HAP-1 (cell line): ENCODE measurements at regions of chr14 and their contacts with region 1.

Region 1: DNA sequence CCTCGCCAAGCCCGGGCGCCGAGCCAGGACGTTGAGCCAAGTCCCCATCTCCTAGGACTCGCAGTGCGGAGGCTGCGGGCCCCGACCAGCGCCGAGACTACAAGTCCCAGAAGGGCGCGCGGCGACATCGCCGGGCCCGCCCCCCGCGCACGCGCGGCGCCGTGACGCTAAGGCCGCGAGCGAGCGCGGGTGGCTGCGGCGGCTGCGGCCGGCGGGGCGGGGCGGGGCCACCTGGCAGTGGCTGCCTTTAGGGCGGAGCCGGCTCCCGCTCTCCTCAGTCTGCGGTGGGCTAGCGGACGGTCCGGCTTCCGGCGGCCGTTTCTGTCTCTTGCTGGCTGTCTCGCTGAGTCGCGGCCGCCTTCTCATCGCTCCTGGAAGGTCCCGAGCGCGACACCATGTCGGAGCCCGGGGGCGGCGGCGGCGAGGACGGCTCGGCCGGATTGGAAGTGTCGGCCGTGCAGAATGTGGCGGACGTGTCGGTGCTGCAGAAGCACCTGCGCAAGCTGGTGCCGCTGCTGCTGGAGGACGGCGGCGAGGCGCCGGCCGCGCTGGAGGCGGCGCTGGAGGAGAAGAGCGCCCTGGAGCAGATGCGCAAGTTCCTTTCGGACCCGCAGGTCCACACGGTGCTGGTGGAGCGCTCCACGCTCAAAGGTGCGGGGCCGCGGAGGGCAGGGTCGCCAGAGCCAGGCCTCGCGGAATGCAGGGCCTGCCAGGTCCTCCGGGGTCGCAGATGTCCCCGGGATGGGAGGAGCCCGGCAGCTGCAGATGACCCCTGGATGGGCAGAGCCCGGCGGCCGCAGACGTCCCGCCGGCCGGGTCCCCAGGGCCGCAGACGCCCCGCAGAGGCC is at the start of gene DYNC1H1:
- DNase-seq: peak; percentile 87 to 93
- H3K4me3 ChIP-seq: peak within 1 kb of the TSS; percentile 98
- H3K4me1 ChIP-seq: peaks cover 10% of the 10 kb centered on the region; the same call in 1 of the 2 replicates
- H3K27me3 ChIP-seq: no peaks in the 10 kb centered on the region

Region 2: DNA sequence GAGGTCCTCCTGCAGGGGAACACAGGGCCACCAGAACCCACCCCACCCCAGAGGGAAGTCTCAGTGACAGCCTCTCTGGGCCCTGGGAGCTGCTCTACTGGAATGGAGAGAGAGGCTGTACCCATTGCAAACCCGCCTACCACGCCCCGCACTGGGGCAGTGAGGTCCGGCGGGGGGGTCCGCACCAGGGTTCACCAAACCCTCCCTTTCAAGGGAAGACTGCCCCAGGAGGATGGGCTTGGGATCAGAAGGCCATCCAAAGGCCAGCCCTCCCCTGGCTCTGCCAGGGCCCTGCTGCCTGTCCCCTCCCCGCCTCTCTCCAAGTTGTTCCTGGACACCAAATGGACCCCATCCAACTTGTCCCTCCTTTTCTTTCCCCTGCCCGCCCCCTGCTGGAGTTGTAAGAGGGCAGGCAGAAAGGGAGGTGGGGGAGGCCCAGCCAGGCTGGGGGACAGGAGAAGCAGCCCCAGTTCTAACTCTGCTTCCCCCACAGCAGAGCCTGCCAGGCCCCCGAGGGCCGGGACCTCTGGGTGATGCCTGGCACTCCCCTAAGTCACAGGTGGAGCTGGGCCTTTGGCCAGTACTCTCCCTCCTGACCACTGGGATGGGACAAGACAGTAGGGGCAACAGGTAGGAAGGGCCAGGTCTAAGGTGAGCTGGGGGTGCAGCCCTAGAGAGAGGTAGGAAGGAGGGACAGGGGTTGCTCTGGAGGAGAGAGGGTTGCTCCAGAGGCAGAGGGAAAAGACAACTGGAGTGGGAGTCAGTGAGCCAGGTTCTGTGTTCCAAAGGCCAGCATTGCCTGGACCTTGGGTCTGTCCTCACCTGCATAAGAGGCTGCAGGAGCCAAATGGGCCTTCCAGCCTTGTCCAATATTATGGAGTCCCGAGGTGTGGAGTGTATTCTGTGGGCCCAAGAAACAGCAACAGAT is 406.4 kb before region 1 on chr14:
- in situ Hi-C with region 1: no loop called
- DNase-seq: no peak
- H3K4me3 ChIP-seq: no peak overlapping the region
- H3K4me1 ChIP-seq: no peaks in the 10 kb centered on the region
- H3K27me3 ChIP-seq: no peaks in the 10 kb centered on the region

Region 3: DNA sequence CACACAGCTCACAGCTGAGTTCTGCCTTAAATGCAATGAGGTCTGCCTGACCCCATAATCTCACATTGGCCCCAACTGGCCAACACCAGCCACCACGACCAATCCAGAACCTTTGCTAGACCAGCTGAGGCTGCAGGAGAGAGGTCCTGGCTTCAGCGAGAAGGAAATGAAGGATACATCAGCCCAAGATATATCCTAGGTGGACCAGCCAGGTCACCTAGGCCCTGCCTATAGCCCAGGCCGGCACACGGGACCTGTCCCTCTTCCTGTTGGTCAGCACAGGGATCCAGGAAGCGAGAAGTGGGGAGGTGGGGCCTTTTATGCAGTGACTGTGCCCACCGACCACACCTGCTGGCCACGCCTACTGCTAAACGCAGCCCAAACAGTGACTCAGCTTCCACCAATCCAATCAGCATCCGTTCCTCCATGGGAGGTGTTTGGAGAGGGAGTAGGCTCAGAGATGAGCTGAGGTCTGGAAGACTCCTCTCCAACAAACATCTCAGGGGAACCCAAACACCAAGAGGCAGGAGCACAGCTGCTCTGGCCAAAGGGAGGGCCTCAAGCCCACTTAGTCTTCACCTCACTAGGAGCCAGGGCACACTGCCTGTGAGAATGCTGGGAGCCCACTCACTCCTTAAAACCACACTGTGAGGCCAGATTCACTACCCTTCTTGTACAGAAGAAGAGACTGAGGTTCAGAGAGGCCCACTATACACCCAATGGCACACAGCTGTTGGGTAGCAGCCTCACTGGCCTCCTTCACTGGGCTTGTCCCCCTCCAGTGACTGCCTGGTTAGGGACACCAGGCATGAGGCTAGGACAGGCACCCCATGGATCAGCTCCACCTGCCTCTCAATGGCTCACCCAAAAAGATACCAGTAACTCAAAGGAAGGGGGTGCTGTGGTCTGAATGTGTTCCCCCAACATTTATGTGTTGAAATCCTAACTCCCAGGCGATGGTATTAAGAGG is 254.3 kb before region 1 on chr14:
- in situ Hi-C with region 1: loop called (anchors 5 kb)
- DNase-seq: no peak
- H3K4me3 ChIP-seq: no peak overlapping the region
- H3K4me1 ChIP-seq: peaks cover 3% of the 10 kb centered on the region
- H3K27me3 ChIP-seq: no peaks in the 10 kb centered on the region

Region 4: DNA sequence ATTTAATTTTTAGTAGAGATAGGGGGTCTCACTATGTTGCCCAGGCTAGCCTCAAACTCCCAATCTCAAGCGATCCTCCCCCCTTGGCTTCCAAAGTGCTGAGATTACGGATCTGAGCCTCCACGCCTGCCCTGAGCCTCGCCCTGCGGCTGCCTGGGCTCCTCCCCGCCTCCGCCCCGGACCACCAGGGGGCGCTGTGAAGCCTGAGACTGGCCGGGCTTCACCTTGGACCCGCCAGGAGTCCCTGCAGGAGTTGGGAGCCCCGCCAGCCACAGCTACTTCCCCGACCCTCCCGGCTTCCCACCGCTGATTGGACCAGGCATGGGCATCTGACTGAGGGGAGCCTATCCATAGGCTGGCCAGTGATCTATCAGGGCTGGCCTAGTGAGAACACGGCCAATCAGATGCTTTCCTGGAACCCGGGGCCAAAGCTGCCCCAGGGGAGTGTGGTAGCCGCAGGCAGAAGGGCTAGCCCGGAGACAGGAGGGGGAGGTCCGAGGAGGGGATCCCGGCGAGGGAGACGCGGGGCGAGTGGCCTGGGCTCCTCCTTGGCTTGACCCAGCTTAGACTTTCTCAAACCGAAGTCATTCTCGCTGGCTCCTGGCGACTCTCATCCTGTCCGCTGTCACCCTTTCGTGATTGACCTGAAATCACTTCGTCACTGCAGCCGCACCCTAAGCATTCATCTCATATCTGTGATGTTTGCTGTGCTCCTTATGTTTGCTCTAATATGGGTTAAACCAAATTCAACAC is 560.1 kb after region 1 on chr14:
- in situ Hi-C with region 1: loop called (anchors 25 kb)
- DNase-seq: peak; percentile 99 to 100
- H3K4me3 ChIP-seq: peak overlapping the region; percentile 40
- H3K4me1 ChIP-seq: peaks cover 18% of the 10 kb centered on the region
- H3K27me3 ChIP-seq: no peaks in the 10 kb centered on the region